ENCODE measurements at regions of chr3 and their contacts with region 1.

Region 1: DNA sequence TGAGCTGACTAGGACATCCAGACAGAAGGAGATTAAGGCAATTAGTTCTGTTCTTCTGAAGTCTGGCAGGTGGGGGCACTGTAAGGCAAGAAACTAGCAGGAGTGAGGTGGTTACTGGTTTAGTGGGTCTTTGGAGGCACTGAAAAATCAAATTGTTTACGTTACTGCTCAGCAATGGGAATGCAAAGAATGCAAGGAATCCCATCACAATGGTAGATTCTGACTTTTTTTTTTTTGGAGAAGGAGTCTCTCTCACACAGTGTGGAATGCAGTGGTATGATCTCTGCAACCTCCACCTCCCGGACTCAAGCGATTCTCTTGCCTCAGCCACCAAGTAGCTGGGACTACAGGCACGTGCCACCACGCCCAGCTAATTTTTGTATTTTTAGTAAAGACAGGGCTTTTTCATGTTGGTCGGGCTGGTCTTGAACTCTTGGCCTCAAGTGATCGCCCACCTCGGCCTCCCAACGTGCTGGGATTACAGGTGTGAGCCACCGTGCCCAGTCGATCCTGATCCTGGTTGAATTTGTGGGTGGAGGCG is 16.4 kb downstream of the FAM107A start:
- DNase-seq: peak; percentile 60
- H3K4me3 ChIP-seq: no peak overlapping the region
- H3K27ac ChIP-seq: no peak overlapping the region
- H3K4me1 ChIP-seq: peaks cover 21% of the 10 kb centered on the region
- H3K27me3 ChIP-seq: no peaks in the 10 kb centered on the region
- CTCF ChIP-seq: peak; percentile 23 to 29

Region 2: DNA sequence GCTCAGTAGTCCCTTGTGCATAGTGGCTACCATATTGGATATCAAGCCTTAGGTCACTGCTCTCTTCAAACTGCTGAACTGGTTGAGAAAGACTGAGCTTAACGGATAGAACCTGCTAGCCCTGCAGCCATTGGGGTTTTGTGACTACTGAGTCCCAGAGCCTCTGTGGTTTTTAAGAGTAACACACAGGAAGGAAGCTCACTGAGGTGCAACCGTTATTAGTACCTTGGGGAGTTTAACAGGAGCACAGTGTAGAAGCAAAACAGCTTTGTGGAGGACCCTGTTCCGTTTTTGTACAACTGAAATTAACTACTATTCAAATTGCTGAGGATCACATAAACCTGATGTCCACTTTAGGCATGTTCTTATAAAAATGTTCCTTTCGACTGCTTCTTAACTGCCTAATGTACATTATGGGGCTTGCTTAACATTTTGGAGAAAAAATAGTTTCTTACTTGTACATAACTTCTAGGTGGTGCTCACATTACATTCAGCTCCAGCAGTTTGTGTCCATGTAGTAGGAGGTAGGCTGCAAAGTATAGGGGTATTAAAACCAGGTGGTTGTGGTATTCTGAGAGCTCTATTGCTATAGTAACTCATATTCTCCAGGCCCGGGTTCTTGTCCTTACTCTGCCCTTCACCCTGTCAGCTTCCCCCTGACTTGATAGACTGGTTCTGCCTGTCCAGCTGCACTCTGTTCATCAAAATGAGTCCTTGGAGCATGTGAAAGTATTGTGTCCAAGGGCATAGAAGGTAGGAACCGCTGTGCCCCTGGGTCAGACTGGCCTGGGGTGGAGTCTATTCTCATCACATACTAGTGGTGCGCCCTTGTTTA is 210.8 kb before region 1 on chr3:
- CTCF ChIA-PET with region 1: no interaction called
- dilution Hi-C with region 1: no loop called
- in situ Hi-C with region 1: no loop called
- intact Hi-C with region 1: no loop called
- DNase-seq: no peak
- H3K4me3 ChIP-seq: no peak overlapping the region
- H3K27ac ChIP-seq: no peak overlapping the region
- H3K4me1 ChIP-seq: no peaks in the 10 kb centered on the region
- H3K27me3 ChIP-seq: no peaks in the 10 kb centered on the region
- CTCF ChIP-seq: no peak

Region 3: GRCh38 chr3:58463181-58463941 is 97.5 kb before region 1 on chr3:
- CTCF ChIA-PET with region 1: no interaction called
- dilution Hi-C with region 1: no loop called
- in situ Hi-C with region 1: no loop called
- intact Hi-C with region 1: no loop called
- DNase-seq: peak; percentile 90
- H3K4me3 ChIP-seq: no peak overlapping the region
- H3K27ac ChIP-seq: no peak overlapping the region
- H3K4me1 ChIP-seq: peaks cover 17% of the 10 kb centered on the region
- H3K27me3 ChIP-seq: peaks cover 4% of the 10 kb centered on the region
- CTCF ChIP-seq: peak; percentile 91 to 96

Region 4: GRCh38 chr3:58596834-58597518 is 36.1 kb after region 1 on chr3:
- CTCF ChIA-PET with region 1: no interaction called
- dilution Hi-C with region 1: no loop called
- in situ Hi-C with region 1: no loop called
- intact Hi-C with region 1: no loop called
- DNase-seq: no peak
- H3K4me3 ChIP-seq: no peak overlapping the region
- H3K27ac ChIP-seq: no peak overlapping the region
- H3K4me1 ChIP-seq: no peaks in the 10 kb centered on the region
- H3K27me3 ChIP-seq: peaks cover 2% of the 10 kb centered on the region
- CTCF ChIP-seq: no peak

Region 5: DNA sequence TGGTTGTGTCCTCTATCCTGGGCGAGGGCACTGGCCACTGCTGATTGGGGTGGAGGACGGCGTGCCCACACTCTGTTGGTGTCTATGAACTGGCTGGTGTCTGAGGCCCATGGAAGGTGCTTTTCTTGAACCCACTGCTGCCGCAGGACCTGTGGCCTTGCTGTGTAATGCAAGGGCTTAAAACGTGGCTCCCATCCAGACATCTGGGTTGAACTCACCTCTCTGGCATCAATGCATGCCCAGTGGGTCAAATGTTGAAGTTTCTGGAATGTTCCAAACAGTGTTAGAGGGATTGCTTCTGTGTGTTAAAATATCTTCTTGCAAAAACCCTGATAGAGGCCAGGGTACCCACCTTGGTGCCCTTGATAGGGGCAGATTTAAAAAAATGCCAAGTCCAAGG is 63.1 kb after region 1 on chr3:
- CTCF ChIA-PET with region 1: no interaction called
- dilution Hi-C with region 1: loop called (anchors 5 kb)
- in situ Hi-C with region 1: loop called in 1 of 2 experiments (anchors 5 kb)
- intact Hi-C with region 1: no loop called
- DNase-seq: no peak
- H3K4me3 ChIP-seq: no peak overlapping the region
- H3K27ac ChIP-seq: no peak overlapping the region
- H3K4me1 ChIP-seq: no peaks in the 10 kb centered on the region
- H3K27me3 ChIP-seq: peaks cover 4% of the 10 kb centered on the region
- CTCF ChIP-seq: no peak

Region 6: DNA sequence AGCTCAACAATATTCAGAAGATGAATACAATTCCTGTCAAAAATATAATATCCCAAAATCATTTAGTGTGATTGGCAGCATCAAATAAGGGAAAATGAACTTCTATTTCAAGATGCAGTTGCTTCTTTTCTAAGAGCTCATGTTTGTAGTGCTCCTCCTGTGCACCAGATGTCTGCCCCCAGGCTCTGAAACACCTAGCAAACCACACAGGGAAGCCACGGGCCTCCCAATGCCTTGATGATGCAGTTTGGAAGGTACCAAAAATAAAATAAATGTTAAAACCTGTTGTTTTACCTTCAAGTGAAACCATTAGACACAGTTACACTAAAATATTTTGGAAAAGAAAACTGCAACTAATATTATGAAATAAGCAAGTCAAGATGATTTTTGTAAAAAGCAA is 466.8 kb after region 1 on chr3:
- CTCF ChIA-PET with region 1: no interaction called
- dilution Hi-C with region 1: no loop called
- in situ Hi-C with region 1: no loop called
- intact Hi-C with region 1: no loop called
- DNase-seq: peak; percentile 61
- H3K4me3 ChIP-seq: no peak overlapping the region
- H3K27ac ChIP-seq: no peak overlapping the region
- H3K4me1 ChIP-seq: peaks cover 6% of the 10 kb centered on the region
- H3K27me3 ChIP-seq: no peaks in the 10 kb centered on the region
- CTCF ChIP-seq: no peak